Mammary epithelial cell (primary cell): ENCODE measurements at regions of chr7 and their contacts with region 1.

Region 1: GRCh38 chr7:116173051-116174028 is 37.0 kb upstream of the TES start:
- DNase-seq: peak; percentile 54
- H3K4me3 ChIP-seq: no peak overlapping the region
- H3K27ac ChIP-seq: no peak overlapping the region
- H3K4me1 ChIP-seq: peaks cover 25% of the 10 kb centered on the region
- H3K27me3 ChIP-seq: no peaks in the 10 kb centered on the region
- CTCF ChIP-seq: peak; percentile 35 to 46

Region 2: DNA sequence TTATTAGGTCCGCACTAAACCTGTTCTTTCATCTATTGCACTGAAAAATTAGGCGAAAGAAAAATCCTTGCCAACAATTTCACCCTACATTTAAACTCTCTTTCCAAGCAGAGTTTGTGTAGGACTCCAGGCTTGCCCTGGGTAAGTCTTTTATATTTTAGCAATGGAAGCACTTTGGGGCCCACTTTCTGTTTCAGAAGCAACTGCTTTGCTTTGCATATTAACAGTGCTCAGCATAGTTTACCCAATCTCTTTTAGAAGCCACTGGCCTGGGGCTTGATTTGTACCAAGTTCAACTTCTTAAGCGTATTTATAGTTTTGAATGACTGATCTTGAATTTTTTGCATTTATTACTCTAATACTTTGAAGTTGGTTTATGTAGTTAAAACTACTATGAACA is 1330.2 kb before region 1 on chr7:
- CTCF ChIA-PET with region 1: interaction called, 15 read pairs
- dilution Hi-C with region 1: no loop called
- in situ Hi-C with region 1: no loop called
- intact Hi-C with region 1: no loop called
- DNase-seq: no peak
- H3K4me3 ChIP-seq: no peak overlapping the region
- H3K27ac ChIP-seq: no peak overlapping the region
- H3K4me1 ChIP-seq: no peaks in the 10 kb centered on the region
- H3K27me3 ChIP-seq: no peaks in the 10 kb centered on the region
- CTCF ChIP-seq: no peak

Region 3: DNA sequence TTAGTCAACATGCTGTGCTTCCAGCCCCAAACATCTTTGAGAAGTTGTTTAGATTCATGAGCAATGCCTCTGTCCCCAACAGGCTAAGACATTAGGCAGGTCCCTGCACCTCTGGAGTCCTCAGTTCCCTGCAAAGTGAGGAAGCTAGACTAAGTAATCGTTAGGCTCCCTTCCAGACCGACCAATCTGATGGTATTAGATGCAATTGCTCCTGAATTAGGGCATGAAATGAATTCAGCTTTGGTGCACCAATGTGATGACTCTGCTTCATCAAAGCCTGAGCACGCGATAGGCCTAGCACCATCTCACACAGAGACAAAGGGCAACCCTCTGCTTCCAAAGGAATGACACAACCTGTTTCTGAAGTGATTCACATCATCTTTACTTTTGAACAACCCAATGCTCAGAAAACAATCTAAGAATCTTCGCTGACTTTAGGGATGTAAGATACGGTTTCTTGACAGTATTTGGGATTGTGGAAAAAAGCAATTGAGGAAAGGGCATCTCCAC is 36.3 kb after region 1 on chr7:
- CTCF ChIA-PET with region 1: no interaction called
- dilution Hi-C with region 1: no loop called
- in situ Hi-C with region 1: no loop called
- intact Hi-C with region 1: no loop called
- DNase-seq: no peak
- H3K4me3 ChIP-seq: peak overlapping the region; percentile 37 to 98 (median 85)
- H3K27ac ChIP-seq: peak overlapping the region; percentile 99
- H3K4me1 ChIP-seq: peaks cover 20% of the 10 kb centered on the region
- H3K27me3 ChIP-seq: no peaks in the 10 kb centered on the region
- CTCF ChIP-seq: no peak

Region 4: GRCh38 chr7:116224492-116225098 is 51.3 kb after region 1 on chr7:
- CTCF ChIA-PET with region 1: no interaction called
- dilution Hi-C with region 1: no loop called
- in situ Hi-C with region 1: no loop called
- intact Hi-C with region 1: no loop called
- DNase-seq: no peak
- H3K4me3 ChIP-seq: no peak overlapping the region
- H3K27ac ChIP-seq: no peak overlapping the region
- H3K4me1 ChIP-seq: peaks cover 30% of the 10 kb centered on the region
- H3K27me3 ChIP-seq: no peaks in the 10 kb centered on the region
- CTCF ChIP-seq: no peak

Region 5: GRCh38 chr7:116576350-116577319 is 403.3 kb after region 1 on chr7:
- CTCF ChIA-PET with region 1: no interaction called
- dilution Hi-C with region 1: no loop called
- in situ Hi-C with region 1: loop called in 1 of 2 experiments (anchors 10 kb)
- intact Hi-C with region 1: no loop called
- DNase-seq: peak; percentile 84
- H3K4me3 ChIP-seq: no peak overlapping the region
- H3K27ac ChIP-seq: peak overlapping the region; percentile 48
- H3K4me1 ChIP-seq: peaks cover 31% of the 10 kb centered on the region
- H3K27me3 ChIP-seq: no peaks in the 10 kb centered on the region
- CTCF ChIP-seq: no peak

Region 6: GRCh38 chr7:117119192-117119924 is 946.0 kb after region 1 on chr7:
- CTCF ChIA-PET with region 1: no interaction called
- dilution Hi-C with region 1: no loop called
- in situ Hi-C with region 1: loop called in 1 of 2 experiments (anchors 25 kb)
- intact Hi-C with region 1: loop called (anchors 2 kb)
- DNase-seq: peak; percentile 57
- H3K4me3 ChIP-seq: no peak overlapping the region
- H3K27ac ChIP-seq: no peak overlapping the region
- H3K4me1 ChIP-seq: peaks cover 4% of the 10 kb centered on the region
- H3K27me3 ChIP-seq: no peaks in the 10 kb centered on the region
- CTCF ChIP-seq: peak; percentile 86 to 94

Region 7: GRCh38 chr7:117385340-117386109 is 1212.2 kb after region 1 on chr7:
- CTCF ChIA-PET with region 1: no interaction called
- dilution Hi-C with region 1: no loop called
- in situ Hi-C with region 1: no loop called
- intact Hi-C with region 1: loop called (anchors 10 kb)
- DNase-seq: peak; percentile 19
- H3K4me3 ChIP-seq: no peak overlapping the region
- H3K27ac ChIP-seq: no peak overlapping the region
- H3K4me1 ChIP-seq: no peaks in the 10 kb centered on the region
- H3K27me3 ChIP-seq: no peaks in the 10 kb centered on the region
- CTCF ChIP-seq: peak in 1 of 2 donors; percentile 54